HEK293T (cell line): ENCODE measurements at regions of chr1 and their contacts with region 1.

Region 1: DNA sequence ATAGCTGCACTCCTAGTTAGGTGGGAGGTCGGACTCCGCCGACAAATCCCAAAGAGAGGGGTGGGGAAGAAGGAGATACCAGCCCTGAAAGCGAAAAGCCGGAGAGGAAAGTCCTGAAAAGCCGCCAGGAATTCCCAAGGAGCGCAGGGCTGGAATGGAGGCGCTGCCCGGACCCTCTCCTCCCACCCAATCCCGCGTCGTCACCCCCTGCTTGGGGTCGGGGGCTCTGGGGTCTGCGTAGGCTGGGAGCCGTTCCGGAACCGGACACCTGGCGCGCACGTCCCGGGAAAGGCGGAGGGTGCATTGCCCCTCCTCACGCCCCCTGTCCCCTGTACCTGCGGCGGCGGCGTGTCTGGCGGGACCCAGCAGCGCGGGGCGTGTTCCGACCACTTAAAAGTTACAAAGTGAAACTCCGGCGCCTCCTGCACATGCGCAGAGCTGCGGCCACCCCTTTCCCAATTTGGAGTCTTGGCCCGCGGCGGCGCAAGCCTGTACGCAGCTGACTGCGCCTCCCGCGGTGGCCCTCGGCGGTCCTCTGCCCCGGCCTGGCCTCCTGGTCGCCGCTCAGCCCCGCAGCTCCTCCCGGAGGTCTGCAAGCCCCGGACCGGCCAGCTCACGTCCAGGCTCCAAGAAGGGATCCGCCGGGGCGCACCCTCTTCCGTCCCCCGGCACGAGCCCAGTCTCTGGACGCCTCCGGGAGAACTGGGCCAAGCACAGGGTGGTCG is at the start of gene TMEM63A:
- DNase-seq: peak; percentile 98

Region 2: GRCh38 chr1:225474986-225475820 is 406.9 kb before region 1 on chr1:
- CTCF ChIA-PET with region 1: interaction called, 11 read pairs
- POLR2A ChIA-PET with region 1: no interaction called
- DNase-seq: peak; percentile 94

Region 3: DNA sequence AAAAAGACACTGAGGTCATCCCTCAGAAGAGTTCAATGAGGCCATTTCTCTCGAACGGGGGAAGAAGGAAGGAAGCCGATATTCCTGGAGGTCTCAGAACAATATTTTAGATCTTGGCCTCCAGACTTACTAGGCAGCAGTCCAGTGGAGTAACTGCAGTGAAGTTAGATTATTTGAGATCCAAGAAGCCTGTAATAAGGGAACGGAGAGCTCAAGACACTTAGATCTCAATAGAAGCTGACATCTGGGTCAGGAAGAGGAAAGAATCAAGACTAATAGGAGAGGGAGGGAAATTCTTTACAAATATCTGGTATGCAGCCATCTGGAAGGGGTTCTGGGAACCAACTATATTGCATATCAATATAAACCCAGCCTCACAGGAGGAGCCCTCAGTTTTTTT is 215.6 kb before region 1 on chr1:
- CTCF ChIA-PET with region 1: no interaction called
- POLR2A ChIA-PET with region 1: no interaction called
- DNase-seq: no peak

Region 4: DNA sequence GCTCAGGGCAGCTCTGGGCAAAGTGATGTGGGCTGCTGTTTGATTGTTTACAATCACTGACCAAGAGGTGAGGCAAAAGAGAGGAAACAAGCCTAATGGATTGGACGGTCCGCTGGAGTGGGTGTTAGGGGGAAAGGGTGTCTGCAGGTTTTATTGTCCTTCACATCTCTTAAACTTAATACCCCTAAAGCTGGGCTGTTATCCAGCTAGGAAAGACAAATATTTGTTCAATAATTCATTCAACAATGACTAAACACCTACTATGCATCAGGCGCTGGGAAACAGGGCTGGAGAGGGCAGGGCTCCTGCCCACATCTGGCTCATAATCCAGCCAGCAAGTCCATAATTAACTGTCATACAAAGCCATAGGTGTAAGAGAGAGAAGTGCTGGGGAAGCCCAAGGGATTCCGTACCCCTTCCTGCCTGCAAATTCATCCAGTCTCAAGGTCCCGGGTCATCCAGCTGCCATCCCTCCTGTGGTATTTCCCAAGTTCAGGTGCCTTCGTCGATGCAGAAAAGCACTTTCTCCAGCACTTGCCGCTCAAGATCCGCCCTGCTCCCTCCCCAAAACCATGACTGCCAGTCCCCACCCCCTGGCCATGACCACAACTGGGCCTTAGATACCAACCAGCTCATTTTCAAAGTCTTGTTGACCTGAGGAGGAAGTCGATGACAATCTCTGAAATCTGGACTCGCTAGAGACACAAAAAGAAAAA is 10.6 kb before region 1 on chr1:
- CTCF ChIA-PET with region 1: interaction called, 4 read pairs
- POLR2A ChIA-PET with region 1: interaction called, 21 read pairs
- DNase-seq: no peak

Region 5: DNA sequence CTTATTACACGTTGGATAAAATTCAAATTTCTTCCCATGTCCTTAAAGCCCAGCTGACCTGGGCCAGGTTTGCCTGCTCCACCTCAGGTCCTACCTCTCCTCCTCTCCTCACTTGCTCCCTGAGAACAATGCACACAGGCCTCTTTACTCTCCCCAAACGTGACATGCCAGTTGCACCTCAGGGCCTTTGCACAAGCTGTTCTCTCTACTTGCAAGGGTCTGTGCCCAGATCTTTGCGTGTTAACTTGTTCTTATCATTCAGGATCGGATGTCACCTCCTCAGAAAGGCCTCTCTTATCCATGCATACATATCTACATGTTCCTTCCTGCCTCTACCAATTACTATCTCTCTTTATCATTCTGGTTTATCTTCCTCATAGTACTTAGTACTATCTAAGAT is 21.5 kb after region 1 on chr1:
- CTCF ChIA-PET with region 1: interaction called, 4 read pairs
- POLR2A ChIA-PET with region 1: interaction called, 16 read pairs
- DNase-seq: no peak

Region 6: DNA sequence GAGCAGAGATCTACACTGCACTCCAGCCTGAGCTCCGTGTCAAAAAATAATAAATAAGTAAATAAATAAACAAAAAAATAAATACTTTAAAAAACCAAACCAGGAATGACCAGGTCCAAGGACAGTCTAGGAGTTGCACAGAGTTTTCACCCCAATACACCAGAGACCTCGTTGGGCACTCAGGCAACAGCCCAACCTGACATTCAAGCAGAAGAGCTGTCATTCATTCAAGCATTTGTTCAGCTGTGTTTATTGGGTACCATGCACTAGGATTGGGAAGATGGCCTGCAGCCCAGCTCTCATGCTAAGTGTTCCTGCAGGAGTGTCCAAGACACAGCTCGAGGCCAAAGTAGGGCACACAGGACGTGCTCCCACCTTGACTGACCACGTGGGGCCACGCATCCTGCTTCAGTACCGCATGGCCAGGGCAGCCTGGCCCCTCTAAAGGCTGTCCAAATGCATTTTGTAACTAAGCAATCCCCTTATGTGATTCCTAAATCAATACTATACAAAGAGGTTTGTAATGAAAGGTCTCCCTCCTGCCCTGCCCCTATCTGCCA is 32.2 kb after region 1 on chr1:
- CTCF ChIA-PET with region 1: no interaction called
- POLR2A ChIA-PET with region 1: no interaction called
- DNase-seq: no peak

Region 7: GRCh38 chr1:225942574-225942973 is 60.4 kb after region 1 on chr1:
- CTCF ChIA-PET with region 1: interaction called, 5 read pairs
- POLR2A ChIA-PET with region 1: interaction called, 10 read pairs
- DNase-seq: no peak